ENCODE measurements at regions of chr22 and their contacts with region 1.

Region 1: GRCh38 chr22:37199103-37199759 is 11.2 kb upstream of the C1QTNF6 start:
- DNase-seq: peak; percentile 100
- H3K4me3 Mint-ChIP-seq: peak overlapping the region; percentile 93
- H3K27ac Mint-ChIP-seq: peak overlapping the region; percentile 98
- H3K4me1 Mint-ChIP-seq: peaks cover 37% of the 10 kb centered on the region
- H3K27me3 Mint-ChIP-seq: no peaks in the 10 kb centered on the region

Region 2: DNA sequence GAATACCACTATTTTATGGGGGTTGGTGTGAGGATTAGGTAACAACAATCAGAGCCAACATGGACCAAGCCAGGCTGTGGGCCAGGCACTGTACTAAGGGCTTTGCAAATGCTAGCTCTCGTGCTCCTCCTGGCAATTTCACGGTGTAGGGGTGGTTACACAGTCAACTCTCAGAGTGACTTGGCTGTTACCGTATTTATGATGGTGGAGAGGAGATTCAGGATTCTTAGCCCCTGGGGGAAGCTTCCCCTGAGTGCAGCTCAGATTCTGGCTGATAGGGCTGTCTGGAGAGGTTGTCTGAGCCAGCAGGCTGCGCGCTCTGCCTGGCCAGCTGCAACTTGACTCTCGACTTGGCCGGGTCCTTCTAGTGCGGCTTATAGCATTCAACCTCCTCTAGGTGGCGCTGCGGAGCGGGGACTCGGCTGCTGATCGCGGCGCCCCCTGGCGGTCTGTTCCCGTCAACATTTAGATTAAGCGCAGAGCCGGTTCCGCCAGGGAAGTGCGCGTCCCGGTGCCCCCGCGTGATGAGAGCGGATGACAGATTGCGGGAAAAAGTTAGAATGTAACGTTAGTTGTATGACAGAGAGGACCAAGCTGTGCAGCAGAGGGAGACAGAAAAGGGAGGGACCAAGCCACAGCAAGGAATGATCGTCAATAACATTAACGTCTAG is 343.0 kb before region 1 on chr22:
- intact Hi-C with region 1: loop called (anchors 2 kb)
- DNase-seq: peak; percentile 99
- H3K4me3 Mint-ChIP-seq: peak overlapping the region; percentile 70
- H3K27ac Mint-ChIP-seq: peak overlapping the region; percentile 57
- H3K4me1 Mint-ChIP-seq: peaks cover 42% of the 10 kb centered on the region
- H3K27me3 Mint-ChIP-seq: no peaks in the 10 kb centered on the region

Region 3: DNA sequence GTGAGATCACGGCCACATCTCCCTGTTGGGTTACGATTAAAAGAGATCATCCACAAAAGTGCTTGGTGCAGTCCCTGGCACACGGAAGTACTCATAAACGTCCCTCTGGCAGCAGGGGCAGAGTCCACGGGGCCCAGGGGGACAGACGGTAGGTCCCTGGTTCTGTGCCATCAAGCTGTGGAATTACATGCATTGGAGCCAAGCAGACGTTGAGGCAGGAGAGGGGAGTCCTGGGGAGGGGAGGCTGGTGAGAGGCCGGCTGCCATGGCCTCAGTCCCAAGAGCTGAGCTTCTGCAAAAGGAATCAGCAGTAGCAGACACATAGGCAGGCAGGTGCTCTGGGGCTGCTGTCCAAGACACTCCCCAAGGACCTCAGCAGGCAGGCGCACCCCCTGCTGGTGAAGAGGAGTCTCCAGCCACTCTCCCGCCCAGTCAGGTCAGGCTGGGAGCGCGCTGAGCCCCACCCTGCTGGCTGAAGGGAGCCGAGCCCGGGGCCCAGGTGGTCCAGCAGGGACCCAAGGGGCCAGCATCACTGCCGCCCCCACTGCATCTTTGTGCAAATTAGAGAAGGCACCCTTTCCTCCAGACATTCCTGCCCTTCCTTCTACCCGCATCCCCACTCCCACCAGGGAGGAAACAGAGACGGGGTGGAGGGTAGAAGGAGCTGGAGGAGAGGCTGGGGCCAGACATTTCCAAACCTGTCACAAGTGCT is 155.2 kb before region 1 on chr22:
- intact Hi-C with region 1: loop called (anchors 10 kb)
- DNase-seq: peak; percentile 86
- H3K4me3 Mint-ChIP-seq: no peak overlapping the region
- H3K27ac Mint-ChIP-seq: no peak overlapping the region
- H3K4me1 Mint-ChIP-seq: peaks cover 25% of the 10 kb centered on the region
- H3K27me3 Mint-ChIP-seq: no peaks in the 10 kb centered on the region

Region 4: DNA sequence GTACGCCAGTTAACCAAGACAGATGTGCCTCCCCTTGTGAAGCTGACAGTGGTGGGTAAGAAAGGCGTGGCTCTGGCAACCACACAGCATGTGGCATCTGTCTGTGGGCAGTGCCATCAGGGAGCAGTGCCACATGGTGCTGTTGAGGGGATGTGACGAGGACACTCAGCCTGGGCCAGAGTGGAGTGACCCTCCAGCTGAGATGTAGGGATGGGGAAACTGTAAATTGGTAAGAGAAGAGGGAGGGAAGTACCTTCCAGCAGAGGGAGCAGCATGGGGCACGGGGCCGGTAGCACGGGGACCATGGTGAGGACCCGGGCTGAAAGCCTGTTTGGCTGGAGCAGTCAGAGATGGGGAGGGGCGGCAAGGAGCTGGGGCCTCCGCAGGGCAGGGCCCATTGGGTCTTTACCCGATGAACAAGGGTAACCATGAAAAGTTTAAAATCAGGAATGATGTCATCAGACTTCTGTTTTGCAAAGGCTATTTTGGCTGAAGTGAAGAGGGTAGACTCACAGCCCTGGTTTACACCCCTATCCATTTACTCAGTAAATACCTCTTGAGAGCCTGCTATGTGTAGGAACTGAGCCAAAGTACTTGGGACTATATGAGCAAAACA is 100.1 kb before region 1 on chr22:
- intact Hi-C with region 1: no loop called
- DNase-seq: no peak
- H3K4me3 Mint-ChIP-seq: no peak overlapping the region
- H3K27ac Mint-ChIP-seq: peak overlapping the region; percentile 15
- H3K4me1 Mint-ChIP-seq: peaks cover 34% of the 10 kb centered on the region
- H3K27me3 Mint-ChIP-seq: no peaks in the 10 kb centered on the region

Region 5: GRCh38 chr22:37121887-37122591 is 77.2 kb before region 1 on chr22:
- intact Hi-C with region 1: loop called (anchors 1 kb)
- DNase-seq: peak; percentile 98
- H3K4me3 Mint-ChIP-seq: peak overlapping the region; percentile 81
- H3K27ac Mint-ChIP-seq: peak overlapping the region; percentile 98
- H3K4me1 Mint-ChIP-seq: peaks cover 74% of the 10 kb centered on the region
- H3K27me3 Mint-ChIP-seq: no peaks in the 10 kb centered on the region

Region 6: GRCh38 chr22:37166675-37167066 is 32.6 kb before region 1 on chr22:
- intact Hi-C with region 1: loop called (anchors 1 kb)
- DNase-seq: peak; percentile 94
- H3K4me3 Mint-ChIP-seq: peak overlapping the region; percentile 69
- H3K27ac Mint-ChIP-seq: peak overlapping the region; percentile 78
- H3K4me1 Mint-ChIP-seq: peaks cover 69% of the 10 kb centered on the region
- H3K27me3 Mint-ChIP-seq: peaks cover 2% of the 10 kb centered on the region

Region 7: GRCh38 chr22:37244114-37244921 is 45.1 kb after region 1 on chr22 and contains the start of gene RAC2:
- intact Hi-C with region 1: loop called (anchors 1 kb)
- DNase-seq: peak; percentile 95
- H3K4me3 Mint-ChIP-seq: peak within 1 kb of the TSS; percentile 99
- H3K27ac Mint-ChIP-seq: peak within 1 kb of the TSS; percentile 98
- H3K4me1 Mint-ChIP-seq: peaks cover 48% of the 10 kb centered on the region
- H3K27me3 Mint-ChIP-seq: no peaks in the 10 kb centered on the region
- total RNA-seq, gene RAC2: 519 and 540 TPM in 2 replicates

Measured in activated CD4-positive, alpha-beta T cell treated with anti-CD3 and anti-CD28 coated beads, Interleukin-2, amount 10 ng/mL, durations not matched to agents 24 days and 14 days (primary cell).